A673 (cell line): ENCODE measurements at regions of chr12 and their contacts with region 1.

Region 1: DNA sequence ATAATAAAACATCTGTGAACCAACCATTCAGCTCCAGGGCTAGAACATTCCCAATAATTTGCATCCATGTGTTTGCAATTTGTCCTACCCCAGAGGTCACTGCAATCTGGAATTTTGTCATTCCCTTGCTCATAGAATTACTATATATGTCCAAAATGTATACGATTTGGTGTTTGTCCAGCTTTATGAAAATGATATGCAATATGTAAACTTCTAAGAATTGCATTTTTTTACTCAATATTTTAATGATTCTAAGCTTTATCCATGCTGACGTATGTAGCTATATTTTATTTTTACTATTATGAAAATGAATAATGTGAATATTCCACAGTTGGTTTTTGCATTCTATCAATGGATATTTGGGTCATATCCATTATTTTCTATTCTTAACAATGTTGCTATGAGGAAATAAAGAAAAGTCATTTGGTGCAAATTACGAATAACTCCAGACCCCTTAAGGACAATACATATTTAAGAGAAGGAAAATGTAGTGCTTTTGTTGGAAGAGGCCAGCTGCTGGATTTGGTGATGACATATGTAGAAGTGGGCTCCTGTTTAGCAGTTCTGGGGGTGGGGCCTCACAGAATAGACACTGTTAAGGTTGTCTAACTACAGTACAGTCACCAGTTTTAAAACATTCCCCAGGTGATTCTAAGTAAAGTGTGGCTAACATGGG is 139.4 kb downstream of the SLC38A4 start:
- DNase-seq: no peak
- H3K4me3 ChIP-seq: no peak overlapping the region
- H3K27ac ChIP-seq: no peak overlapping the region
- H3K4me1 ChIP-seq: no peaks in the 10 kb centered on the region
- H3K27me3 ChIP-seq: no peaks in the 10 kb centered on the region
- CTCF ChIP-seq: no peak

Region 2: GRCh38 chr12:46332260-46332659 is 354.1 kb before region 1 on chr12:
- CTCF ChIA-PET with region 1: interaction called, 13 read pairs
- POLR2A ChIA-PET with region 1: no interaction called
- intact Hi-C with region 1: no loop called
- DNase-seq: no peak
- H3K4me3 ChIP-seq: no peak overlapping the region
- H3K27ac ChIP-seq: no peak overlapping the region
- H3K4me1 ChIP-seq: no peaks in the 10 kb centered on the region
- H3K27me3 ChIP-seq: no peaks in the 10 kb centered on the region
- CTCF ChIP-seq: no peak